Ascending aorta (tissue), 2 donors: ENCODE measurements at regions of chr14 and their contacts with region 1.

Region 1: GRCh38 chr14:67704484-67705089 is 2.9 kb downstream of the RDH12 start:
- DNase-seq: no peak
- H3K4me3 ChIP-seq: no peak overlapping the region
- H3K27ac ChIP-seq: no peak overlapping the region
- H3K4me1 ChIP-seq: no peaks in the 10 kb centered on the region
- H3K27me3 ChIP-seq: no peaks in the 10 kb centered on the region
- CTCF ChIP-seq: peak; percentile 63 to 79 (median 68)

Region 2: DNA sequence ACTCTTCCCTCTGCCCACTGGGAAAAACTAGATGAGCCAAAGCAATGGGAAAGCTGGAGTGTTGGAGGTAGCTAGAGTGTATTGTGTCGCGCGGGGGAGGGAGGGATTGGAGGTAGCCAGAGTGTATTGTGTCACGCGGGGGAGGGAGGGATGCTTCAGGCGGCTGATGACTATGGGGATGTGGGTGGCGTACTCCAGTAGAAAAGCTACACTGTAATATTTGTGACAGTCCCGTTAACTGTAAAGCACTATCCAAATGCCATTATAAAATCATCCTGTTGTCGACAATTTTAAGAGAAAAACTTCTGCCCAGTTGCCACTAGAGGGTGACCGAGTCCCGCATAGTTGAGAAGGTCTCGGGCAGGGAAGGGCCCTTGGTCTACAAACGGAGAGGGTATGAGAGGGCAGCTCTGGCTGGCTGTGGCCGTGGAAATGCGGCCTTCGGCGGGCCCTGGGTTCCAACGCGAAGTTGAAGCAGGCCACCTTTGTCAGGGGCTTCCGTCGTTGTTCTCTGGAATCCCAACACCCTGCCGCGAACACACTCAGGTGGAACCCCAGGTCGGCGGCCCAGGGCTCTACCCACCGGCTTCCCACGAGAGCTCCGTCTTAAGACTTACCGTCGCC is 277.5 kb before region 1 on chr14:
- intact Hi-C with region 1: loop called (anchors 5 kb)
- DNase-seq: peak in 1 of 2 donors; percentile 80
- H3K4me3 ChIP-seq: no peak overlapping the region
- H3K27ac ChIP-seq: no peak overlapping the region
- H3K4me1 ChIP-seq: no peaks in the 10 kb centered on the region
- H3K27me3 ChIP-seq: no peaks in the 10 kb centered on the region
- CTCF ChIP-seq: peak; percentile 56 to 77 (median 64)

Region 3: GRCh38 chr14:67524634-67524963 is 180.0 kb before region 1 on chr14:
- intact Hi-C with region 1: loop called (anchors 5 kb)
- DNase-seq: no peak
- H3K4me3 ChIP-seq: no peak overlapping the region
- H3K27ac ChIP-seq: no peak overlapping the region
- H3K4me1 ChIP-seq: no peaks in the 10 kb centered on the region
- H3K27me3 ChIP-seq: no peaks in the 10 kb centered on the region
- CTCF ChIP-seq: no peak

Region 4: DNA sequence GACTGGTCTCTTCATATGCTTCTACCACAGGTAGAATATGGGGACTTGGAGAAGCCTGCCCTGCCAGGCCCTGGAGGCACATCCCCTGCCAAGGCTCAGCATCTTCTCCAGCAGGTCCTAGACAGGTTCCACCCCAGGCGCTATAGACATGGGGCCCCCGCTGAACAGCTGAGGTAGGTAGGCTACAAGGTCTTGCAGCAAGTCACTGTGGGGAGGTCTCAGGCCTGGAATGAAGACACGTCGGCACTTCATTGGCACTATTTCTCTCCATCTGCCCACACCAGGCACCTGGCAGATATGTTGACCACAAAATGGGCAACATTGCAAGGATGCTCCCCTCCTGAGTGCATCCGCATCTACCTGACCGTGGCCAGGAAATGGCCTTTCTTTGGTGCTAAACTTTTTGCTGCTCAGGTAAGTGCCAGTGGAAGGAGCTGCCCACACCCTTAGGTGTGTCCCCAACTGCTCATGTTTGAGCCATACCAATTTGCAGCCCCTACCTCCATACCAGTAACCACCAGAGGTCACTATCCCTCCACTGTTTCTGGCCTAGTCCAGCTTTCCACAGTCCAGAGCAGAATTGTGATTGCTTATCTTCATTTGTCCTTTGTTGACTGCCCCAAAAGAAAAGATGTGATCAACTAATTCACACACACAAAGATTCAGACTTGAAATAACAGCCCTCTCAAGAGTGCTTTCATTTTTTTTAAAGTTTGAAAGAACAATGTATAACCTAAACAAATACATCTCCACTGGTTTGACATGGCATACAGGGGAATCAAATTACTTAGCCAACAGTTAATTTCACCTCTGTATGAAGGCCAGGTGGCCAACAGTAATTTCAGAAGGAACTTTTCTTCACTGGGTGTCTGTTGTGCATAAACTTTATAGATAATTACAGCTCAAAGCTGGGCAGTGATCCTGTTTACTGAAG is 120.6 kb before region 1 on chr14:
- intact Hi-C with region 1: loop called (anchors 1 kb)
- DNase-seq: peak in 1 of 2 donors; percentile 59
- H3K4me3 ChIP-seq: no peak overlapping the region
- H3K27ac ChIP-seq: no peak overlapping the region
- H3K4me1 ChIP-seq: no peaks in the 10 kb centered on the region
- H3K27me3 ChIP-seq: no peaks in the 10 kb centered on the region
- CTCF ChIP-seq: peak; percentile 14 to 44 (median 33)

Region 5: DNA sequence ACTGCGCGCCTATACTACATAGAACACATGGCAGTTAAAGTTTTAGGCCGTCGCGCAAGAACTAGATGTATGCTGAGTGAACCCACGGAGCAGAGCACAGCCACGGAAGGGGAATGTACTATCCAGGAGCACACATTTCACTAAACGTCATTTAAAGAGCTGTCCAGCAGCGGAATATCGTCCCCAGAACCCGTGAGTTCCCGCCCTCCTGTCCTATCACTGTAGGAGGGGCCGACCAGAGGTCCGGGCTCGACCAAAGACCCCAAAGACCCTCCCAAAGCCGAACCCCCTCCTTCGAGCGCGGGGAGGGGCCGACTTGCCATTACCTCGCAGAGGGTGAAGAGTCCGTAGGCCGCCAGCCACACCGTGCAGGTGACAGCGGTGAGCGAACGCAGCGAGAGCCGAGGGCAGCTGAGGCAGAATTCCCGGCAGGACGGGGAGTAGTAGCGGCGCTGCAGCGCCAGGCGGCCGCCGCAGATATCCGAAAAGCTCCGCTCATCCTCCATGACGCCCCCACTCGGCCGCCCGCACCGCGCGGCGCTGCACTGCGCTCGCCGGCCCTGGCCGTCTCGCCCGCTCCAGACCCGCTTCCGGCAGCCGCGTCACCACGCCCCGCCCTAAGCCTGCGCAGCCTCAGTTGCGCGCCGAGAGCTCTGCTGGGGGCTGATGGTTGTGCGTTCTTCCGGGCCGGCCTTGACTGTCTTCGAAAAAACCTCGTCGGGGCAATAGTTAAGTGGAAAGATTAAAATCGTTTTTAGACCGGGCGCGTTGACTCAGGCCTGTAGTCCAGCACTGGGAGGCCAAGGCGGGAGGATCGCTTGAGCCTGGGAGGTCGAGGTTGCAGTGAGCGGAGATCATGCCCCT is 104.7 kb before region 1 on chr14 and contains the start of gene PIGH:
- intact Hi-C with region 1: loop called (anchors 1 kb)
- DNase-seq: peak; percentile 56 to 95
- H3K4me3 ChIP-seq: peak within 1 kb of the TSS; percentile 84 to 90
- H3K27ac ChIP-seq: peak within 1 kb of the TSS; percentile 88 to 92
- H3K4me1 ChIP-seq: peaks cover 4 to 10% of the 10 kb centered on the region in 2 donors
- H3K27me3 ChIP-seq: no peaks in the 10 kb centered on the region
- CTCF ChIP-seq: peak; percentile 52 to 53 (median 52)
- total RNA-seq, gene PIGH: 20.9 TPM

Region 6: DNA sequence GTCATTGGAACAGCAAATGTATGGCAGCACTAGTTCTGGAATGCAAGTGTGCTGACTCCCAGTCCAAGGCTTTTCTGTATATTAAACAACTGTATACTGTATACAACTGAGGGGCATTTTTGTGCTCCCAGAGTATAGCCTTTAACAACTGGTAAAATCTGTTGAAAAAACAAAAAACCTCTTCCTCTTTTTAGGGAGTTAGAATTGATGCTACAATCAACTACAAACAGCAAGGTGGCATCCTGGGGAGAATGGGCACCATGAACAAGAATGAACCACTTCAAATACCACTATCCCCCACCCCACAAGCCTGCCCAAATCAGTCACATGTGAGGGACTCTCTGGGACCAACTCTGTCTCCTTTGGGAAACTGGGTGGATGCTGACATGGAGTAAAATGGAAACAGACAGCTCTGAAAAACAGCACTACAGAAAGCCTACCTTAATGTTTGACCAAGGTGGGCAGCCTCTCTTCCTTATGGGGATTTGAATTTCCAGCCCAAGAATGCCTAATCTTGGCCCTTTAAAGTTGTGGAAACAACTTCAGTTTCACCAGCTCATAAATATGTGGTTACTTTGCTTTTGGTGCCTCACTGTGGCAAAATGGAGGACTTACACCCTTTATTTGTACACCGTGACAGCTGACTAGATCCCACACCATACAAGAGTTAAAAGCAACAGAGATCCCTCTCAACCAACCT is 37.7 kb before region 1 on chr14:
- intact Hi-C with region 1: loop called (anchors 5 kb)
- DNase-seq: no peak
- H3K4me3 ChIP-seq: no peak overlapping the region
- H3K27ac ChIP-seq: no peak overlapping the region
- H3K4me1 ChIP-seq: peaks cover 0 to 6% of the 10 kb centered on the region in 2 donors
- H3K27me3 ChIP-seq: no peaks in the 10 kb centered on the region
- CTCF ChIP-seq: peak; percentile 43 to 59 (median 51)

Region 7: DNA sequence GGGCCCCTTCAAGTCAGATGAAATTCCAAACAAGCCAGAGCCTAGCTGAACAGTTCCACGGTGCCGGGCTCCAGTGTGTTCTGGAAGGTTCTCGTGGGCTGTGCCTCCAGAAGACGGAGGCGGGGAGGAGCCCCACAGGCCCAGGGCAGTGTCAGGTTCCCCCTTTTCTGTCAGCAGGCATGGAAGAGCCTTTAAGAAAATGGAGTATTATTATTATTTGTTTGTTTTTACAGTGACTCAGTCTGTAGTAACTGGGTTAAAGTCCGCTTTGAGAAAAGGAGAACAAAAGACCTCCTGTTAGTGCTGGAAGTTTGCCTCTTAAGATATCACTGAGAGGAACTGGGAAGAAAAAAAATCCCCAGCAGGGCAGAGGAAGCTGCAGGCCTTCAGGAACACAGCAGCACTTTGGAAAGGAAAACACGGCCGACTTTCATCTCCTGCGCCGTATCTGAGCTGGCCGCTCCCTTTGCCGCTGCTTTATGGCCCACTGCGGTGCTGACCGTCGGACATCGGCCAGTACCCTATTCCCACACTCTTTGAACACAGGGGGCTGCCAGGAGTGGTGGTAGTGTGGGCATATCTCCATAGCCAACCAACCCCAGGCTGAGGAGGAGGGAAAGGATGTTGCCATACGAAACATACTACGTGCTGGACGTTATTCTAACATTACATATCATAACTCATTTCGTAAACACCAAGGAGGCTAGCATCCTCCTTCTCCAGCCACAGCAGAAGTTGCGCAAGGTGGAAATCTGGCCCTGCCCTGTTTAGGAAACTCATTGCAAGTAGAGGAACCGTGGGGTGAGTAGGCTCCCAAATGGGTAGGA is 894.2 kb after region 1 on chr14:
- intact Hi-C with region 1: no loop called
- DNase-seq: peak in 1 of 2 donors; percentile 83
- H3K4me3 ChIP-seq: peak overlapping the region in 1 of 2 donors; percentile 37
- H3K27ac ChIP-seq: peak overlapping the region; percentile 76 to 80
- H3K4me1 ChIP-seq: peaks cover 0 to 13% of the 10 kb centered on the region in 2 donors
- H3K27me3 ChIP-seq: no peaks in the 10 kb centered on the region
- CTCF ChIP-seq: no peak